ENCODE measurements at regions of chr18 and their contacts with region 1.

Region 1: GRCh38 chr18:13813271-13813849 is 10.6 kb upstream of the MC5R start:
- DNase-seq: peak; percentile 72
- ATAC-seq: peak; percentile 69
- H3K4me3 Mint-ChIP-seq: no peak overlapping the region
- H3K27ac Mint-ChIP-seq: no peak overlapping the region; the same call in 1 of the 2 replicates
- H3K4me1 Mint-ChIP-seq: peaks cover 50% of the 10 kb centered on the region
- H3K27me3 Mint-ChIP-seq: no peaks in the 10 kb centered on the region
- CTCF ChIP-seq: peak; percentile 56; the same call in 1 of the 2 replicates

Region 2: GRCh38 chr18:13745696-13746095 is 67.7 kb before region 1 on chr18:
- CTCF ChIA-PET with region 1: no interaction called
- POLR2A ChIA-PET with region 1: no interaction called
- DNase-seq: no peak
- ATAC-seq: no peak
- H3K4me3 Mint-ChIP-seq: no peak overlapping the region
- H3K27ac Mint-ChIP-seq: no peak overlapping the region
- H3K4me1 Mint-ChIP-seq: no peaks in the 10 kb centered on the region
- H3K27me3 Mint-ChIP-seq: no peaks in the 10 kb centered on the region
- CTCF ChIP-seq: no peak

Region 3: GRCh38 chr18:13756261-13756660 is 57.1 kb before region 1 on chr18:
- CTCF ChIA-PET with region 1: no interaction called
- POLR2A ChIA-PET with region 1: no interaction called
- DNase-seq: no peak
- ATAC-seq: no peak
- H3K4me3 Mint-ChIP-seq: no peak overlapping the region
- H3K27ac Mint-ChIP-seq: no peak overlapping the region
- H3K4me1 Mint-ChIP-seq: no peaks in the 10 kb centered on the region
- H3K27me3 Mint-ChIP-seq: no peaks in the 10 kb centered on the region
- CTCF ChIP-seq: no peak

Region 4: DNA sequence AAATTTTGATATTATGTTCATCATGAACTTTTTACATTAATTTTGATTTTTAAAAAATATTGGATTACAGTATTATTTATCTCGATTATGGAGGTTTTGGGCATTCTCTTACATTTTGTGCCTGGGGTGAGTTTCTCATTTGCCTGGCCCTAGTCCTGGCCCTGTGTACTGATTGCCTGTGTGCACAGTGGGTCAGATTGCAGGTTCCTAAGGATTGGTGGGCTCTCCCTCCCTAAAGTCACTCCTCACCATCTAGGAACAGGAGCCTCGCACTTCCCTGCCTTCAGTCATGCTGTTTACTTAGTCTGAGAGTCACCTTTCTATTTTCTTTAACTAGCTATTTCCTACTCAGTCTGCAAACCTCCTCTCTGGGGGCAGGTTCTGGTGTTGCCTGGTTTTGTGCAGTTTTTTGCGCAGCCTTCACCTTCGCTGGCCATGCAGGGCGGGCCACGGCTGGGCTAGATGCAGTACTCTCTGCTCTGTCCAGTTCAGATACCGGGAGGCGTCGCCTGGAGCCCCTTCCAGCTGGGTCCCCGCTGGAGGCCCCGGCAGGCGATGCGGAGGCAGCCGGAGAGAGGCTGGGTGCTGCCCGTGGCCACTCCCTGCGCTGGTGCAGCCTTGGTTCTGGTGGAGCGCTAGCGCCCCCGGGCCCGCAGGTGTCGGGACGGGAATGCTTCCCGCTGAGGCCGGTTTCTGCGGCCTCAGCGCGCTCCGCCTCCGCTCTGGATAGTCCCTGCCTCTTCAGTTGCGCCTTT is 12.7 kb before region 1 on chr18:
- CTCF ChIA-PET with region 1: interaction called, 36 read pairs
- POLR2A ChIA-PET with region 1: no interaction called
- DNase-seq: peak; percentile 74
- ATAC-seq: peak; percentile 85
- H3K4me3 Mint-ChIP-seq: peak overlapping the region; percentile 68
- H3K27ac Mint-ChIP-seq: no peak overlapping the region
- H3K4me1 Mint-ChIP-seq: peaks cover 46% of the 10 kb centered on the region
- H3K27me3 Mint-ChIP-seq: peaks cover 13% of the 10 kb centered on the region
- CTCF ChIP-seq: no peak

Region 5: DNA sequence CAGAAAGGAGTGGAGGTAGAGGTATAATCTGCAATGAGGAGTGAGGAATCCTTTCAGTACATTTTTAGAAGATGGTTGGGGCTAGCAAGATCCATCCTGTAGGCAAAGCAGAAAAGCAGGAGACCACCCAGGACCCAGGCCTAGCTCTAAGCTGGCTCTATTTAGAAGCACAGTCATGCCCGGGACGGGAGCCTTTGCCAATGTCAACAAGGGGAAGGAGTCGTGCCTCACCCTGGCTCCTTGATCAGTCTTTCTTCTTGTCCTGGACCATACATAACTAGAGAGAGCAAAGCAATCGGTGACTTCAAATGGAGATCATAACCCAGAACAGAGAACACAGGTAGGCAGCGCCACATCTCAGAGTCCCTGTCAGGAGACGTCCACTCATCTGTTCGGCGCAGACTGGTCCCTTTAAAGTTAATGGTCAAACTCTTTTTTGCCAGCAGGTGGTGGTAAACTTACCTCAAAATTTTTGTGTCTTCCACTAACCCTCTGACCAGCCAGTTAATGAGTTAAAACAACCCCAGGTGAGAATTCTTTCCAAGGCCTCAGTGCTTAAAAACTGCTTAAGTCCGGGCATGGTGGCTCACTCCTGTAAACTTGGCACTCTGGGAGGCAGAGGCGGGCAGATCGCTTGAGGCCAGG is 18.6 kb after region 1 on chr18:
- CTCF ChIA-PET with region 1: interaction called, 25 read pairs
- POLR2A ChIA-PET with region 1: no interaction called
- DNase-seq: no peak
- ATAC-seq: peak; percentile 80
- H3K4me3 Mint-ChIP-seq: no peak overlapping the region
- H3K27ac Mint-ChIP-seq: no peak overlapping the region
- H3K4me1 Mint-ChIP-seq: peaks cover 15% of the 10 kb centered on the region; the same call in 1 of the 2 replicates
- H3K27me3 Mint-ChIP-seq: no peaks in the 10 kb centered on the region
- CTCF ChIP-seq: no peak

Region 6: DNA sequence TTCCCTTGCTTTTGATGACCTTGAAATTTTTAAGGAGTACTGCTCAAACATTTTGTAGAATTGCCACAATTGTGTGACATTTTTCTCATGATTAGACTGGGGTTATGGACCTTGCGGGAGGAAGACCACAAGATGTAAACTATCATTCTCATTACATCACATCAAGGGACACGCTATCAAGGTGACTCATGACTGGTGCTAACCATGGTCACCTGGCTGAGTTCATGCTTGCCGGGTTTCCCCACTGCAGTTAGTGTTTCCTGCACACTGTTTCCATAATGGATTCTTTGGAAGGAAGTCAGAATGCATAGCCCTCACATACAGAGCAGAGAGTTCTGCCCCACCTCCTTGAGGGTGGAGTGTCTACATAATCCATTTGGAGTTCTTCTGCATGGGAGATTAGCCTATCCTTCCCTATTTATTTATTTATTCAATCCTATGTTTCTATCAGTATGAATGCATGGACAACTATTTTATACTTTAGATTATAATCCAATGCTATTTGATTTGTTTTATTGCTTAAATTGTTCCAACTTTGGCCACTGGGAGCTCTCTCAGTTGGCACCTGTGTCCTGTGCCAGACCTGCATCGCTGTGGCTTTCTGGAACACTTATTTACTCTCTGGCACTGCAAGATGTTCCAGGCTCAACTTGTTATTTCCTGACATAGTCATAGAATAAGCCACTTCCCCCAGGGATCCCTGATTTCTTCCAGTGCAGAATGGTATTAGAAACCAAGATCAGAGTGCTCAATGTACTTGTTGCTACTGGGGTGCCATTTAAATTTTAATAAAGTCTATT is 96.0 kb after region 1 on chr18:
- CTCF ChIA-PET with region 1: no interaction called
- POLR2A ChIA-PET with region 1: no interaction called
- DNase-seq: no peak
- ATAC-seq: no peak
- H3K4me3 Mint-ChIP-seq: no peak overlapping the region
- H3K27ac Mint-ChIP-seq: no peak overlapping the region
- H3K4me1 Mint-ChIP-seq: no peaks in the 10 kb centered on the region
- H3K27me3 Mint-ChIP-seq: no peaks in the 10 kb centered on the region
- CTCF ChIP-seq: no peak

Region 7: GRCh38 chr18:13982136-13982535 is 168.8 kb after region 1 on chr18:
- CTCF ChIA-PET with region 1: interaction called, 13 read pairs
- POLR2A ChIA-PET with region 1: no interaction called
- DNase-seq: peak; percentile 49
- ATAC-seq: peak; percentile 98
- H3K4me3 Mint-ChIP-seq: no peak overlapping the region
- H3K27ac Mint-ChIP-seq: no peak overlapping the region
- H3K4me1 Mint-ChIP-seq: peaks cover 21% of the 10 kb centered on the region
- H3K27me3 Mint-ChIP-seq: peaks cover 15% of the 10 kb centered on the region
- CTCF ChIP-seq: no peak

Region 8: GRCh38 chr18:14086458-14087231 is 273.3 kb after region 1 on chr18:
- CTCF ChIA-PET with region 1: interaction called, 68 read pairs
- POLR2A ChIA-PET with region 1: no interaction called
- DNase-seq: peak; percentile 47
- ATAC-seq: peak; percentile 88
- H3K4me3 Mint-ChIP-seq: no peak overlapping the region
- H3K27ac Mint-ChIP-seq: no peak overlapping the region
- H3K4me1 Mint-ChIP-seq: peaks cover 10% of the 10 kb centered on the region
- H3K27me3 Mint-ChIP-seq: no peaks in the 10 kb centered on the region
- CTCF ChIP-seq: peak; percentile 66

Measured in WTC11 (cell line).